Activated CD4-positive, alpha-beta T cell treated with anti-CD3 and anti-CD28 coated beads, Interleukin-2, amount 10 ng/mL, durations not matched to agents 24 days and 14 days (primary cell): ENCODE measurements at regions of chr3 and their contacts with region 1.

Region 1: DNA sequence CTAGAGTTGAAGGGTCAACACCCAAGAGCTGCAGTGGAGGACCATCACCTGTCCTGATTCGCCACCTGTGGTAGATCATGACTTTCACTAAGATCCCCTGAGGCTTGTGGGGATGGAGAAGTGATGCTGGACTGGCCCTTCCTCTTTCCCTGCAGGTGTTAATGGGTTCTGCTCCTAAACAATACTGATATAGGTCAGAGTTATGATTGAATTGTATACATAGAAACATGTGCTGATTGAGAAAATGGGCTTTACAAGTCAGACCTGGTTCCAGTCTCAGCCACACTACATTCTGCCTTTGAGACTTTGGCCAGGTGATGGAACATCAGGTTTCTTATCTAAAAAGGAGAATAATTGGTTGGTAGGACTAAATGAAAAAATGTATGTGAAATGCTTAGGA is 418.9 kb upstream of the TPRG1 start:
- DNase-seq: no peak
- H3K4me3 Mint-ChIP-seq: no peak overlapping the region
- H3K27ac Mint-ChIP-seq: peak overlapping the region; percentile 2
- H3K4me1 Mint-ChIP-seq: peaks cover 21% of the 10 kb centered on the region
- H3K27me3 Mint-ChIP-seq: peaks cover 2% of the 10 kb centered on the region

Region 2: DNA sequence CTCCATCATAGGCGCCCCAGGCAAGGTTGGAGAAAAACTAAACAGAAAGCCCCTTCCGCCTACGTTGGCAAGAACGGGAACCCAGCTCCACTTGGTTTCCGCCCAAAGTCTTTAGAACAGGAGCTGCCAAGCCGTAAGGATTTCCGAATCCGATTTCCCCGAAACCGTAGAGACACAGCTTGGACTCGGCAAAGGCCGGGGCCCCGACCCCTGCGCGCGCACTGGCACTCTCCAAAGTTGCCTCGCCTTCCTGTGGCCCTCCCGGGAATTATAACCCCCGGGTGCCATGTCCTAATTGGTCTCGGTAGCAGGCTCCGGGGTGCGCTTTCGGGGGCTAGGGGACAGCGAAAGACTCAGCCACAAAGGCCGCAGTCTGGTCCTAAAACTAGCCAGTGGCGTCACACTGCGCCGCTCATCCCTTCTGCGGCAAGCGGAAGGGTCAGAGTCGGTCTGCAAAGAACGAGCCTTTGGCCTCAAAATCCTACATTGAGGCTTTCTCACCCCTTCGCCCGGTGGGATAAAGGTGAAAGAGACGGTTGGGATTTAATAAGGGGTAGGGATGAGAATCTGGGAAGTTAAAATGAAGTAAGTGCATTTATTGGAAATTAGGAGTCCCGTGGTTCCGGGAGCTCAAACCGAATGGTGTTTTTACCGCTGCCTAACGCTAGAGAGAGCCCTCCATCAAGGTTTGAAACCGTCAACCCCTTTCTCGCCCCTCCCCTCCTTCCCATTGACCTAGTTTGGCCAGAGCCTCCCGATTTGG is 1014.3 kb before region 1 on chr3:
- intact Hi-C with region 1: loop called (anchors 1 kb)
- DNase-seq: peak; percentile 92
- H3K4me3 Mint-ChIP-seq: peak overlapping the region; percentile 98
- H3K27ac Mint-ChIP-seq: peak overlapping the region; percentile 99
- H3K4me1 Mint-ChIP-seq: peaks cover 51% of the 10 kb centered on the region
- H3K27me3 Mint-ChIP-seq: no peaks in the 10 kb centered on the region

Region 3: GRCh38 chr3:188294823-188295487 is 457.9 kb before region 1 on chr3:
- intact Hi-C with region 1: loop called (anchors 1 kb)
- DNase-seq: no peak
- H3K4me3 Mint-ChIP-seq: no peak overlapping the region
- H3K27ac Mint-ChIP-seq: no peak overlapping the region
- H3K4me1 Mint-ChIP-seq: peaks cover 71% of the 10 kb centered on the region
- H3K27me3 Mint-ChIP-seq: no peaks in the 10 kb centered on the region

Region 4: DNA sequence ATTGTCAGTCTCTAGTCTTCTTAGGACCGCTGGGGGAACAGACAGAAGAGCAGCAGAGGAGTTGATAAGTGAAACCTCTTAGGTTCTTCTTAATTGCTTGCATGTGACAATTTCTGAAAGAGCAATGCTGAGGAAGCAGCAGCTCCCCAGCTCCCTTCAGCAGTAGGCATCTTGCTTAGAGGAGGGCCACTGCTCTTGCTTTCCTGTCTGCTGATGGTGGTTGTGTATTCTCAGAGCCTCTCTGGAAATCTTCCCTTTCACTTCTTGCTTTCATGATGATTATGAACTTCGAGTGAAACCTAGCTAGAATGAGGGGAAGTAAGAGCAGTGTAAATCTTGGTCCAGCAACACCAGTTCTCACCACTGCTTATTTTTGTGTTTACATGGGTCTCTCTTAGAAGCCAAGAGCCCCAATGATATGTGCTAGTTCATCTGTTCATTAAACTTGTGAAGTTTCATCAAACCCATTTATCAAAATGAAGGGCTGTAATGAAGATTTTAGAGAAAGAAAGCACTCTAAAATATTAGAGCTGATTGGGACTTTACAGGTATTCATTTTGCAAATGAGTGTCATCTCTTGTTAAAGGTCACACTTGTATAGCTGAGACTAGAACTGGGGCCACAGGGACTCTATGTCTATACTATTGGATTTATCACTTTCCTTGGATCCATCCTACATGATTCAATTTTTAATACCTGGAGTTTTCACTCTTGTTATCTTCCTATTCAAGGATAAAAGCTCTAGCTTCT is 352.2 kb before region 1 on chr3:
- intact Hi-C with region 1: loop called (anchors 10 kb)
- DNase-seq: peak; percentile 81
- H3K4me3 Mint-ChIP-seq: peak overlapping the region; percentile 18
- H3K27ac Mint-ChIP-seq: peak overlapping the region; percentile 68
- H3K4me1 Mint-ChIP-seq: peaks cover 62% of the 10 kb centered on the region
- H3K27me3 Mint-ChIP-seq: no peaks in the 10 kb centered on the region

Region 5: DNA sequence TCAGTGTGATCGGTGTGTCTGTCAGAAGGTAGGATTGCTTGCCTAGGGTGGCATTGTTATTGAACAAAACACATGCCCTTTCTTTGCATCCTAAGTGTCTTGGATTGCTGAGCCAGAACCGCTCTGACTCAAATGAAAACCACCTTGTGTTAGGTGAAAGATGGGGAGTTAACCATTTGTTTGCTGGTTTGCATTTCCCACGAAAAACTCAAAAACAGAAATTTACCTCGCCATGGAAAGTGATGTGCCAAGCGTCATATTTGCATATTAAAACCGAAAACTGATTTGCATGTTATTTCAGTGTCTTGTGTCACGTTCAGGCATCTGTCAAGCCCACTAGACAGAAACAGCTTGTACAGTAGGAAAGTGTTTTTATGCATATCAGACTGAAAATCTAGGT is 55.7 kb before region 1 on chr3:
- intact Hi-C with region 1: loop called (anchors 1 kb)
- DNase-seq: no peak
- H3K4me3 Mint-ChIP-seq: no peak overlapping the region
- H3K27ac Mint-ChIP-seq: peak overlapping the region; percentile 12
- H3K4me1 Mint-ChIP-seq: peaks cover 24% of the 10 kb centered on the region
- H3K27me3 Mint-ChIP-seq: peaks cover 3% of the 10 kb centered on the region

Region 6: DNA sequence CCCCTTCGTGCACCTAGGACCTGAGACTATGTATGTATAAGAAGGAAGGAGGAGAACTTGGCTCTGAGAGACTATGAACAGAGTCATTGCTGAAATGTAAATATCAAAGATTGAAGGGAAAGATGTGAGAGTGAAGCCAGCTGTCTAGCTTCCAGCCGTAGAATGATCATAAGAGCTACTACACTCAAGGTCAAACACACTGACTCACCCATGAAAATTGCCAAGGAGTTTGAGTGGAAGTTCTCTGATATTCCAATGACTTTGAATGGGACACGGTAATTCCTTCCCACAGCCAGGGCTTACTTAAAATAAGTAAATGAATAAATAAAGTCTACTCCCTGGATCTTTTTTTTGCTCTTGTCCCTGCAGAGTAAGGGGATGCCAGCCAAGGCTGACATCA is 20.0 kb after region 1 on chr3:
- intact Hi-C with region 1: no loop called
- DNase-seq: no peak
- H3K4me3 Mint-ChIP-seq: no peak overlapping the region
- H3K27ac Mint-ChIP-seq: no peak overlapping the region
- H3K4me1 Mint-ChIP-seq: no peaks in the 10 kb centered on the region
- H3K27me3 Mint-ChIP-seq: peaks cover under 1% of the 10 kb centered on the region

Region 7: DNA sequence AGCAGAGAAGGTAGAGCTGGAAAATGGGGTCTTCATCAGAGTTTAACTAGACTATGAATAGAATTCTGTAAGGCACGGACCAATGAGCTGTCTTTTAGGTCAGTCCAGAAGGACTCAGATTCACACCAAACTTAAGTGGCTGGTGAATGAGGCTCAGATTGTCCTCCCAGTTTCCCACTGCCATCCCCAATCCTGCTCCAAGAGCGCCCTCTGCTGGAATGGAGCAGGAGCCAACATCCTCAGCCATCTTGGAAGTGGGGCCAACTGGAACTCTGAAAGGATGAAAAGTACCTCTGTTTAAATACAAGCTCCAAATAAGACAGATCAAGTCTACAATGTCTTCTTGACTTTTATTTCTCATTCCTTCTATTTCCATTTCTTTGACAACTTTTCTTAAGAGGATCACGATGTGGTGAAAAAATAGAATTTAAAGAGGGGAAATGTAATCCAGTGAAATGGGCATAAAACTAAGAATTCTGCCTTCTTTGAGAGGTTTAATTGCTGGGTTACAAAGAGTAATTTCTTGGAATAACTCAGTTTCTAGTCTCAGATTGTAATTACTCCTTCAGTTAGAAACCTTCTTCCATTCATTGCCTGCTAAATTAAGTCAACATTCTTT is 201.8 kb after region 1 on chr3:
- intact Hi-C with region 1: loop called (anchors 2 kb)
- DNase-seq: peak; percentile 94
- H3K4me3 Mint-ChIP-seq: no peak overlapping the region
- H3K27ac Mint-ChIP-seq: peak overlapping the region; percentile 10
- H3K4me1 Mint-ChIP-seq: peaks cover 27% of the 10 kb centered on the region
- H3K27me3 Mint-ChIP-seq: peaks cover 6% of the 10 kb centered on the region